Colonic mucosa (tissue), 4 donors: ENCODE measurements at regions of chr1 and their contacts with region 1.

Region 1: DNA sequence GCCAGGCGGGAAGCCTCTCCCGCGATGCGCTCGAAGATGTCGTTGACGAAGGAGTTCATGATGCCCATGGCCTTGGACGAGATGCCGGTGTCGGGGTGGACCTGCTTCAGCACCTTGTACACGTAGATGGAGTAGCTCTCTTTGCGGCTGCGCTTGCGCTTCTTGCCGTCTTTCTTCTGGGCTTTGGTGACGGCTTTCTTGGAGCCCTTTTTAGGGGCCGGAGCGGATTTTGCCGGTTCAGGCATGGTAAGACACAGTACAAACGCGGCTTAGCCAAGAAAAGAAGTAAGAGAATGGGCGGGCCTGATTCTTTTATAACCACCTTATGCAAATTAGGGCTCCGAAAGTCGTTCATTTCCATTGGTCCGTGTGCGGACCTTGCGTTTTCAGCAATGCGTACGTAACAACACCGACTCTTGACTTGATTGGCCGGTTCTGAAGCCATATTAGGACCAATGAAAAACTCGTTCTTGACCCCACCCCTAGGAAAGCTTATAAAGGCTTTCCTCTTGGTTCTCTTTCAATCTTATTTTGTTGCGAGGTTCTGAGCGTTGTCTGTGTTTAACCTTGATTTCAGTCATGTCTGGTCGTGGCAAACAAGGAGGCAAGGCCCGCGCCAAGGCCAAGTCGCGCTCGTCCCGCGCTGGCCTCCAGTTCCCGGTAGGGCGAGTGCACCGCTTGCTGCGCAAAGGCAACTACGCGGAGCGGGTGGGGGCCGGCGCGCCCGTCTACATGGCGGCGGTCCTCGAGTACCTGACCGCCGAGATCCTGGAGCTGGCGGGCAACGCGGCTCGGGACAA is 12.8 kb upstream of the BOLA1 start:
- DNase-seq: peak; percentile 95
- H3K4me3 ChIP-seq: peak overlapping the region; percentile 64
- H3K27ac ChIP-seq: peak overlapping the region; percentile 100
- H3K4me1 ChIP-seq: no peaks in the 10 kb centered on the region
- H3K27me3 ChIP-seq: no peaks in the 10 kb centered on the region
- CTCF ChIP-seq: no peak

Region 2: DNA sequence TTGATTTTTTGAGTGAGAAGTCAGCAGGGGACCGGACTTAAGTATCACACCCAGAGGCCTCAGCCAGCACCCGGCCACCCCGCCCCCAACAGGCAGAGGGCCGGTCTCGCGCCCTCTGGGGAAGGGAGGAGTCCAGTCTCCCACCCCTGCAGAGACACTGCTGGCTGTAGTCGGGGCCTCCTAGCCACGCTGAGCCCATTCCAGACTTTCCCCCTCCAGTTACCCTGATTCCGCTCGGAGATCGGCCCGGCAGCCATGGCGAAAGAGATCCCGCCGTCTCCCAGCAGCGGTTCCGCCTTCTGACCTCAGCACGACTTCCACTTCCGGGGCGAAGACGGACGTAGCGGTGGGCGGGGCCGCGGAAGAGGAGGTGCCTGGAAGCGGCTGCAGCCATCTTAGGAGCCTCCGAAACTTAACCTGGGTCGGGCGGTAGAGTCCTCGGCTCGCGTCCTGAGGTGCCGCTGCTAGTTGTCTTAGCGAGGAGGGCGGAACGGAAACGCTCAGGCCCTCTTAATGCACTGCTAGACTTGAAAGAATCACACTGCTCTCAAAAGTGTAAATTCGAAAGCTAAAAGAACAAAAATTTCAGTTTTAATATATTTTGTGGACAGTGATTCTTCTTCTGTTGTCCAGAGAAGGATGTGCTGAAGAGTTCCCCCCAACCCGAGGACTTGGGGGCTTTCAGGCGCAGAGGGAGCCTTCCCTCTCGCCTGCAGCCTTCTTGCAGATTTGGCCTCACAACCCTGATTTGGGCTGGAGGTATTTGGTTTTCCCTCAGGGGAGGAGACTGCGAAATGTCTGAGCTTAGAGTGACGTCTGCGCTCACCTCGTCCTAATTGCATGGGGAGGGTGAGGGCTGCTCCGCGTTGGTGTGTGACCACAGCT is 41.1 kb after region 1 on chr1 and contains the start of gene SF3B4:
- intact Hi-C with region 1: loop called (anchors 2 kb)
- DNase-seq: peak; percentile 97
- H3K4me3 ChIP-seq: peak within 1 kb of the TSS; percentile 96
- H3K27ac ChIP-seq: peak within 1 kb of the TSS; percentile 98
- H3K4me1 ChIP-seq: peaks cover 4% of the 10 kb centered on the region
- H3K27me3 ChIP-seq: no peaks in the 10 kb centered on the region
- CTCF ChIP-seq: no peak
- total RNA-seq, gene SF3B4: 42.2 to 66.1 TPM